Prostate gland (tissue), 2 donors: ENCODE measurements at regions of chr11 and their contacts with region 1.

Region 1: GRCh38 chr11:65418711-65419459 is 3.7 kb upstream of the NEAT1 start:
- DNase-seq: peak; percentile 95
- H3K4me3 ChIP-seq: peak overlapping the region; percentile 7 to 24
- H3K27ac ChIP-seq: peak overlapping the region; percentile 100
- H3K4me1 ChIP-seq: peaks cover 27% of the 10 kb centered on the region
- H3K27me3 ChIP-seq: no peaks in the 10 kb centered on the region
- CTCF ChIP-seq: no peak
- POLR2A ChIP-seq: peak; percentile 40

Region 2: GRCh38 chr11:65366340-65366773 is 52.5 kb before region 1 on chr11:
- intact Hi-C with region 1: loop called (anchors 10 kb)
- DNase-seq: peak; percentile 54
- H3K4me3 ChIP-seq: no peak overlapping the region
- H3K27ac ChIP-seq: no peak overlapping the region
- H3K4me1 ChIP-seq: peaks cover 6% of the 10 kb centered on the region
- H3K27me3 ChIP-seq: no peaks in the 10 kb centered on the region
- CTCF ChIP-seq: peak; percentile 64 to 94 (median 78)
- POLR2A ChIP-seq: no peak

Region 3: DNA sequence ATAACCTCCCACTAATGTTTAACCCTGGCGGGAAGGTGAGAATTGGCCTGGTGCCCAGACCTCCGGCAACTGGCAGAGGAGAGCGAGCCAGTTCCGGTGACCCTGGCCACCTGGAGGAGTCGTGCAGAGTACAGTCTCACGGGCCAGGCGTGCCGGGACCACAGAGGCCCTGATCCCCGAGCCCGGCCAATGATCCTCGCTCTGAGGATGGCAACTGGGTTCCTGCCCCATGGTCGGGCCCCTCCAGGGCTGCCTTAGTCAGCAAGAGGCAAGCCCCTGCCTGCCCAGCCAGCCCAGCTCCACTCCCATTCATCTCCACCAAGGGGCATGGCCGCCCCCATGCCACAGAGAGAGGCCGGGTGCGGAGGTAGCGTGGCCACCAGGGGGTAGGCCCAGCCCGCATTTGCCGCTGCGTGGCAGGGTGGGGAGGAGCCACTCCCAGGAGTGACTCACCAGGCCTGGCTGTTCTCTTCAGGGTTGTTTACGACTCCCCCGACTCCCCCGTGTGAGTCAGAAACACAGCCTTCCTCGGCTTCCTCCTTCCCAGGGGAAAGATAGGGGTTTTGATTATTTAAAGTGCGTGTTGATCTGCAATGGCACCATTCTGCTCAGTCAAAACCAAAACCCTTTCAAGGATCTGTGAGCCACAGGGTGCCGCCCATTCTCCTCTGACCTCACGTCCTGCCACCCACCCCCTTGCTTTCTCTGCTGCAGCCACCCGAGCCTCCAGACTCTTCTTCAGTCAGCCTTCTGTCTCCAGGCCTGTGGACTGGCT is 36.7 kb before region 1 on chr11 and contains the start of gene SLC25A45:
- intact Hi-C with region 1: loop called (anchors 2 kb)
- DNase-seq: peak; percentile 94
- H3K4me3 ChIP-seq: peak within 1 kb of the TSS; percentile 22 to 26
- H3K27ac ChIP-seq: peak within 1 kb of the TSS; percentile 95 to 98
- H3K4me1 ChIP-seq: peaks cover 4% of the 10 kb centered on the region
- H3K27me3 ChIP-seq: no peaks in the 10 kb centered on the region
- CTCF ChIP-seq: peak; percentile 72 to 99 (median 92)
- POLR2A ChIP-seq: peak; percentile 49
- total RNA-seq, gene SLC25A45: 11.7 to 13.3 TPM

Region 4: GRCh38 chr11:65497141-65498041 is 78.5 kb after region 1 on chr11:
- intact Hi-C with region 1: loop called (anchors 2 kb)
- DNase-seq: peak; percentile 97
- H3K4me3 ChIP-seq: peak overlapping the region; percentile 80 to 88
- H3K27ac ChIP-seq: peak overlapping the region; percentile 98 to 100
- H3K4me1 ChIP-seq: peaks cover 29% of the 10 kb centered on the region
- H3K27me3 ChIP-seq: no peaks in the 10 kb centered on the region
- CTCF ChIP-seq: peak in 1 of 4 experiments; percentile 29
- POLR2A ChIP-seq: peak; percentile 72

Region 5: GRCh38 chr11:65506770-65507505 is 88.1 kb after region 1 on chr11:
- intact Hi-C with region 1: loop called (anchors 1 kb)
- DNase-seq: peak; percentile 75
- H3K4me3 ChIP-seq: peak overlapping the region in 1 of 2 donors; percentile 88
- H3K27ac ChIP-seq: peak overlapping the region; percentile 98 to 100
- H3K4me1 ChIP-seq: no peaks in the 10 kb centered on the region
- H3K27me3 ChIP-seq: no peaks in the 10 kb centered on the region
- CTCF ChIP-seq: no peak
- POLR2A ChIP-seq: peak; percentile 6